ENCODE measurements at regions of chr19 and their contacts with region 1.

Region 1: GRCh38 chr19:48795055-48795684 is 15.7 kb downstream of the BCAT2 start:
- DNase-seq: peak; percentile 96
- H3K4me3 ChIP-seq: peak overlapping the region; percentile 55 to 68
- H3K27ac ChIP-seq: peak overlapping the region; percentile 56 to 70; a peak in 3 of 4 replicates
- H3K4me1 ChIP-seq: peaks cover 5% of the 10 kb centered on the region in 2 experiments; a peak in 1 of 4 replicates
- H3K27me3 ChIP-seq: no peaks in the 10 kb centered on the region
- CTCF ChIP-seq: peak; percentile 98
- EP300 ChIP-seq: no peak
- RAD21 ChIP-seq: peak; percentile 74

Region 2: GRCh38 chr19:48646001-48646721 is 149.0 kb before region 1 on chr19 and contains the start of gene CA11:
- CTCF ChIA-PET with region 1: interaction called, 12 read pairs
- POLR2A ChIA-PET with region 1: interaction called, 3 read pairs
- DNase-seq: peak; percentile 96
- H3K4me3 ChIP-seq: peak within 1 kb of the TSS; percentile 43 to 74
- H3K27ac ChIP-seq: peak within 1 kb of the TSS; percentile 54 to 69
- H3K4me1 ChIP-seq: peaks cover 4 to 6% of the 10 kb centered on the region in 2 experiments; a peak in 2 of 4 replicates
- H3K27me3 ChIP-seq: no peaks in the 10 kb centered on the region
- CTCF ChIP-seq: peak; percentile 76
- EP300 ChIP-seq: no peak
- RAD21 ChIP-seq: peak; percentile 90
- polyA plus RNA-seq, gene CA11: 13.1 and 13.5 TPM in 2 replicates

Region 3: DNA sequence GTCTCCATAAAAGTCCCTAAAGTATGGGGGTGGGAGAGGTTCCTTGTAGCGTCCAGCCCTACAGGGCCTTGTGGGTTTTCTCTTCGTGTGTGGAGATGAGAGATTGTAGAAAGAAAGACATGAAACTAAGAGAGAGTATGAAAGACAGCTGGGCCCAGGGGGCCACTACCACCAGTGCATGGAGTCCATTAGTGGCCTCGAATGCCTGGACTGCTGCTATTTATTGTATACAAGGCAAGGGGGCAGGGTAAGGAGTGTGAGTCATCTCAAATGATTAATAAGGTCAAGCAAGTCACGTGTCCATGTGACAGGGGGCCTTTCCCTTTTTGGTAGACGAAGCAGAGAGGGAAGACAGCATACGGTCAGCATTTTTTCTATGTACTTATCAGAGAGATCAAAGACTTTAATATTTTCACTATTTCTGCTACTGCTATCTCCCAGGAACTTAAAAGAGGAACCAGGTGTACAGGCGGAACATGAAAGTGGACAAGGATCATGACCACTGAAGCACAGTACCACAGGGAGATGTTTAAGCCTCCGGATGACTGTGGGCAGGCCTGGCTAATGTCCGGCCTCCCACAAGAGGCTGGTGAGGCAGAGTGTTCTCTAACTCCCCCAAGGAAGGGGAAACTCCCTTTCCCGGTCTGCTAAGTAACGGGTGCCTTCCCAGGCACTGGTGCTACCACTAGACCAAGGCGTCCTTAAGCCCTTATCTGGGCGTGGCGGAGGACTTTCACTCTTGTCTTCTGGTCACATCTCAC is 14.4 kb before region 1 on chr19:
- CTCF ChIA-PET with region 1: interaction called, 17 read pairs
- POLR2A ChIA-PET with region 1: no interaction called
- DNase-seq: no peak
- H3K4me3 ChIP-seq: no peak overlapping the region
- H3K27ac ChIP-seq: no peak overlapping the region
- H3K4me1 ChIP-seq: no peaks in the 10 kb centered on the region; a peak in 1 of 4 replicates
- H3K27me3 ChIP-seq: no peaks in the 10 kb centered on the region
- CTCF ChIP-seq: no peak
- EP300 ChIP-seq: no peak
- RAD21 ChIP-seq: no peak

Region 4: DNA sequence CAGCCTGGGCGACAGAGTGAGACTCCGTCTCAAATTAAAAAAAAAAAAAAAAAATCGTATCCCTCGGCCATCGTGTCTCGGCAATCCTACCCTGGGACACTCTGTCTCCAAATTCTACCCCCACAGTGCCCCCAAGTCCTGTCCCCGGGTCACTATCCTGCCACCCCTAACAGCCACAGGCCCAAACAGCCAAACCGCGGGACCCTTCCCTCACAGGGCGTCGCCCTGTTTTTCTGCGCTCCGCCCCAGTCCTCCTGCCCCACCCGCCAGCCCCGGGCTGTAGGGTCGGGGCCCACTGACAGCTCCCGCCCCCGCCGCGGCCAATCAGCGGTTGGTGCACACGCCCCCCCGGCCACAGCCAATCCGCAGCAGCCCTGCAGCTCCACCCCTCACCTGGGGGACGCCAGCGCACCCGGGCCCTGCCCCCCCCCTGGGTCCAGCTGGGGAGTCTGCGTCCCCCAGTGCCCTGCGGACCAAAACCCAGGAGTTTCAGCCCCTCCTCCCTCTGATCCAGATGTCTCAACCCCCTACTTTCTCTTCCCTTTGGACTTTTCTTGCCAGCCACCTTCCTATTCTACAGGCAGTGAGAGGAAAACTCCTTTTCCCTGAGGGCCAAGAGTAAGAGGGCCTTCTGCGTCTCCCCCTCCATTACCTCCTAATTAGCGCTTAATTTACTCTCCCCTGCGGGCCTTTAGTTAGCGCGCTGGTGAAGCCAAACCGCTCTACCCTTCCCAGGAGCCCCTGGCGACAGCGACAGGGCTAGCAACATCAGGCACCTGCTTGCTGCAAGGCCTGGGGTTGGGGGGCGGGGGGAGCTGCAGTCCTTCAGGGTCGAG is 17.1 kb after region 1 on chr19:
- CTCF ChIA-PET with region 1: interaction called, 59 read pairs
- POLR2A ChIA-PET with region 1: interaction called, 10 read pairs
- DNase-seq: peak; percentile 97
- H3K4me3 ChIP-seq: peak overlapping the region; percentile 48 to 59
- H3K27ac ChIP-seq: peak overlapping the region in 1 of 2 experiments; percentile 53; a peak in 2 of 4 replicates
- H3K4me1 ChIP-seq: peaks cover 0 to 12% of the 10 kb centered on the region in 2 experiments; a peak in 2 of 4 replicates
- H3K27me3 ChIP-seq: no peaks in the 10 kb centered on the region
- CTCF ChIP-seq: no peak
- EP300 ChIP-seq: no peak
- RAD21 ChIP-seq: no peak

Region 5: DNA sequence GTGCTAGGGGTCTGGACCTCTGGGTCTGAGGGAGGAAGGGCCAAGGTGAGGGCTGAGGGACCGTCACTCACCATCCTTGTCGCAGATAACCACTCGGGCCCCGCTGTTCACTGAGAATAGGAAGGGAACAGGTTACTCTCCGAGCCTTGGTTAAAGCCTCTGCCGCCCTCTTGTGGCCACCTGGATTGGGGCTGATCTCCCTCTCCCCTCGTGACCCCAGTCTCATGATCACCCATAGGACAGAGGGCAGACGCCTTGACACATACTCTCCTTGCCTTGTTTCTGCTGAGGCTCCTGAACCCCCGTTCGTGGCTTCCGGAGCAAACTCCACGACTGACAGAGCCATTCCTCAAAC is 40.5 kb after region 1 on chr19:
- CTCF ChIA-PET with region 1: interaction called, 457 read pairs
- POLR2A ChIA-PET with region 1: interaction called, 5 read pairs
- DNase-seq: peak; percentile 87
- H3K4me3 ChIP-seq: peak overlapping the region; percentile 63 to 71
- H3K27ac ChIP-seq: peak overlapping the region; percentile 83 to 89
- H3K4me1 ChIP-seq: peaks cover 0 to 12% of the 10 kb centered on the region in 2 experiments; a peak in 1 of 4 replicates
- H3K27me3 ChIP-seq: no peaks in the 10 kb centered on the region
- CTCF ChIP-seq: peak; percentile 94
- EP300 ChIP-seq: no peak
- RAD21 ChIP-seq: peak; percentile 92

Region 6: GRCh38 chr19:48970923-48971395 is 175.8 kb after region 1 on chr19:
- CTCF ChIA-PET with region 1: interaction called, 34 read pairs
- POLR2A ChIA-PET with region 1: no interaction called
- DNase-seq: peak; percentile 87
- H3K4me3 ChIP-seq: no peak overlapping the region; a peak in 1 of 4 replicates
- H3K27ac ChIP-seq: no peak overlapping the region
- H3K4me1 ChIP-seq: peaks cover 0 to 9% of the 10 kb centered on the region in 2 experiments; a peak in 2 of 4 replicates
- H3K27me3 ChIP-seq: no peaks in the 10 kb centered on the region
- CTCF ChIP-seq: peak; percentile 94
- EP300 ChIP-seq: no peak
- RAD21 ChIP-seq: peak; percentile 82

Measured in SK-N-SH (cell line).